ENCODE measurements at regions of chr17 and their contacts with region 1.

Region 1: DNA sequence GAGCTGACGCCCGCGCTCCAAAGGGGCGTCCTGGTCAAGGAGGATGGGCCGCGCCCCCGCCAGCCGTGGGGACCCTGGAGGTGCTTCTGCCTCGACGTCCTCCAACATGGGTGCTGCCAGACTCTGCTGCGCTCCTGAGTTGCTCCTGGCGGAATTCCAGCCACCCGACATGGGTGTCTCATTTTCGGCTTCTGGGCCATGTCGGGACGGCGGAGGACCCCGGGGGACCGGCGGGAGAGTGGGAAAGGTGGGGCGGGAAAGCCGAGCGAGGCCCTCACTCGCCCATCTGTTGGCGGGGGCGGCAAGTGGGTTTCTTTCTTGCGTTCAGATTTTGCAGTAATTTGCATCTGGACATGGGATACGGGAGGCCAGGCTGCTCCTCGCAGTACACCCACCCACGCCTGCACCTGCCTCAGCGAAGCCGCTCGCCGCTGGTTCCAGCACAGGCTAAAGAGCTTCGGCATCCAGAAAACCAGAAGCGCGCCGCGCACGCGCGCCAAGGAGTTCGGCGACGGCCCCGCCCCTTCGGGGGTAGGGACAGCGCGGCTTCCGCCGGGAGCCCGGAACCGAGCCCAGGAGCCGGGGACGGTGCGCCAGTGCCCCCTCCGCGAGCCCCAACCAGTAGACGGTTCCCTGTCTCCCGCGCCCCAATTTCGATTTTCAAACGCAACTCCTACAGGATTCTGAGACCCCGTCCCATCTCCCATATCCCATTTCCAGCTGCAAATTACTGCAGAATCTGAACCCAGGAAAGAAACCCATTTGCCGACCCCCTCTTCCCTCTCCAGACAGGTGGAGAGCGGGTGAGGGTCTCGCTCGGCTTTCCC is at the start of gene ARMC7:
- DNase-seq: peak; percentile 91
- ATAC-seq: peak; percentile 84
- H3K4me3 Mint-ChIP-seq: peak within 1 kb of the TSS; percentile 87
- H3K27ac Mint-ChIP-seq: peak within 1 kb of the TSS; percentile 90
- H3K4me1 Mint-ChIP-seq: peaks cover 32% of the 10 kb centered on the region
- H3K27me3 Mint-ChIP-seq: no peaks in the 10 kb centered on the region
- CTCF ChIP-seq: no peak
- total RNA-seq, gene ARMC7: 5.4 TPM

Region 2: GRCh38 chr17:74852237-74853047 is 257.2 kb before region 1 on chr17:
- CTCF ChIA-PET with region 1: no interaction called
- POLR2A ChIA-PET with region 1: no interaction called
- intact Hi-C with region 1: no loop called
- DNase-seq: peak; percentile 53
- ATAC-seq: peak; percentile 84
- H3K4me3 Mint-ChIP-seq: peak overlapping the region; percentile 57
- H3K27ac Mint-ChIP-seq: no peak overlapping the region
- H3K4me1 Mint-ChIP-seq: peaks cover 2% of the 10 kb centered on the region
- H3K27me3 Mint-ChIP-seq: peaks cover 49% of the 10 kb centered on the region
- CTCF ChIP-seq: no peak

Region 3: GRCh38 chr17:74950207-74950606 is 159.4 kb before region 1 on chr17:
- CTCF ChIA-PET with region 1: no interaction called
- POLR2A ChIA-PET with region 1: no interaction called
- intact Hi-C with region 1: no loop called
- DNase-seq: no peak
- ATAC-seq: no peak
- H3K4me3 Mint-ChIP-seq: no peak overlapping the region
- H3K27ac Mint-ChIP-seq: no peak overlapping the region
- H3K4me1 Mint-ChIP-seq: no peaks in the 10 kb centered on the region
- H3K27me3 Mint-ChIP-seq: no peaks in the 10 kb centered on the region
- CTCF ChIP-seq: no peak

Region 4: DNA sequence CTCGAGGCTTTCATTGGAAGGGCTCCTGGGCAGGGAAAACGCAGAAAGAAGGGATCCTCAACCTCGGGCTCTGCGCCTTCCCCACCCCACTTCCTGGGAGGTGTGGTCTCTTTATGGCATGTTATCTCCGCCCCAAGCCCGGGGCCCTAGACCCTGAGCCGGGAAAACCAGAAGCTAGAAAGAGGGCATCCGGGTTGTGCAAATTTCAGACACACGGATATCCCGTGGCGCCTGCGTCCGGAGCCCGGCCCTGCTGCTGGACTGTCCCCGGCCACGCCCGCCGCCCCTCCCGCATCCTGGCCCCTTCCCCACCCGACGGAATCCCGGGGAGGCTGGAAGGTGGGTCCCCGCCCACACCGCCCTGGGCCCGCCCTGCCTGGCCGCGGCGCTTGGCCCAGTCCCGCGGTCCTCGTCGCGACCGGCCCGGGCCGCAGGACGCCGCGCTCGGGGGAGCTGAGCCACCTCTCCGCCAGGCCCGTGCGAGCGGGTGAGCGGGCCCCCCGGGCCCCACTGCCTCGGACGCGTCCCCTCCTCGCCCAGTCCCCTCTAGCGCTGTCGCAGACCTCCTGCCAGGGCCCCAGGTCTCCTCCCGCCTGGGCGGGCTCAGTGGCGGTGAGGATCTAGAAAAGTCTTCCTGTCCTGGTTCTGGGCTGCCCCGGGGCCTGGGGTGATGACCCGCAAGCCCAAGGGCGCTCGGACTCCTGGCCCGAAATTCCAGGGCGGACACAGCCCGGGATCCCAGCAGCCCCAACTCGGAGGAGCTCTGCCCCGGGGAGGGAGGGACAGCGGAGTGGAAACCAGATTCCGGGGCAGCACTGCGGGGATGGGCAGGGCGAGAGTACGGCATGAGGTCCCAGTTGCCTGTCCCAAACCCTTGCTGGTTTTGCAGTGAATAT is 21.8 kb before region 1 on chr17 and contains the start of gene SLC16A5:
- CTCF ChIA-PET with region 1: interaction called, 15 read pairs
- POLR2A ChIA-PET with region 1: interaction called, 8 read pairs
- intact Hi-C with region 1: no loop called
- DNase-seq: peak; percentile 48
- ATAC-seq: peak; percentile 50
- H3K4me3 Mint-ChIP-seq: peak within 1 kb of the TSS; percentile 66
- H3K27ac Mint-ChIP-seq: peak within 1 kb of the TSS; percentile 42
- H3K4me1 Mint-ChIP-seq: peaks cover 24% of the 10 kb centered on the region
- H3K27me3 Mint-ChIP-seq: no peaks in the 10 kb centered on the region
- CTCF ChIP-seq: no peak
- total RNA-seq, gene SLC16A5: 2.0 to 2.8 TPM

Region 5: GRCh38 chr17:75131280-75132017 is 21.8 kb after region 1 on chr17 and contains the start of gene NT5C:
- CTCF ChIA-PET with region 1: interaction called, 147 read pairs
- POLR2A ChIA-PET with region 1: interaction called, 40 read pairs
- intact Hi-C with region 1: no loop called
- DNase-seq: peak; percentile 86
- ATAC-seq: peak; percentile 83
- H3K4me3 Mint-ChIP-seq: peak within 1 kb of the TSS; percentile 86
- H3K27ac Mint-ChIP-seq: peak within 1 kb of the TSS; percentile 93
- H3K4me1 Mint-ChIP-seq: peaks cover 12% of the 10 kb centered on the region
- H3K27me3 Mint-ChIP-seq: no peaks in the 10 kb centered on the region
- CTCF ChIP-seq: peak; percentile 51
- total RNA-seq, gene NT5C: 66.1 to 68.1 TPM

Region 6: DNA sequence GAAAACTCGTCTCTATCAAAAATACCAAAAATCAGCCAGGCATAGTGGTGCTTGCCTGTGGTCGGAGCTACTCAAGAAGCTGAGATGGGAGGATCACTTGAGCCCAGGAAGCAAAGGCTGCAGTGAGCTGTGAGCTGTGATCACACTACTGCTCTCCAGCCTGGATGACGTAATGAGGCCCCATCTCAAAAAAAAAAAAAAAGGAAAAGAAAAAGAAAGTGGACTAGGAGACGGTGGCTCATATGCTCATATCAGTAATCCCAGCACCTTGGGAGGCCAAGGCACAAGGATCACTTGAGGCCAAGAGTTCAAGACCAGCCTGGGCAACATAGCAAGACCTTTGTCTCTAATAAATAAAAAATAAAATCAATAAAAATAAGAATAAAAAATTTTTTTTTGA is 82.0 kb after region 1 on chr17:
- CTCF ChIA-PET with region 1: interaction called, 33 read pairs
- POLR2A ChIA-PET with region 1: interaction called, 7 read pairs
- intact Hi-C with region 1: no loop called
- DNase-seq: no peak
- ATAC-seq: no peak
- H3K4me3 Mint-ChIP-seq: no peak overlapping the region
- H3K27ac Mint-ChIP-seq: no peak overlapping the region
- H3K4me1 Mint-ChIP-seq: peaks cover 8% of the 10 kb centered on the region
- H3K27me3 Mint-ChIP-seq: no peaks in the 10 kb centered on the region
- CTCF ChIP-seq: no peak

Region 7: DNA sequence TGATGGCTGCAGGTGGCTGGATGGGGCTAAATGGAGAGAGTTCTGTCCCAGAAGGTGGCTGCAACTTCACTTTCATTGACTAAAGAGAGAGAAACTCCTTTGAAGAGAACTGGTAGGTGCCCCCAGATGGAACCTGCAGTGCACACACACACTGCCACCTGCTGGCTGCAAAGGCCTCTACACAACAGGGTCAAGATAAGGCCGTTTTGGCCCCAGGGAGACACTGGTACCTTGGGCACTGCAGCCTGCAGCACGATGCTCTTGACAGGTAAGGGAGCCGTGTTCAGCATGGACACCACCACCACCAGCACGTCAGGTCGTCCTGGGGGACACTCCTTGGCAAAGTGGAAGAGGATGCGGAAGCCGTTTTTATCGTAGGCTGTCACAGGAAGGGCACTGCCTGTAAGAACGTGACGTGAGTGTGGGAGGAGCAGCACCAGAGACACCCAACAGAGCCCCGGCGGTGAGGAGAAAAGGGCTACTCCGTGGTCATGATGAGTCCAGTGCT is 129.1 kb after region 1 on chr17:
- CTCF ChIA-PET with region 1: interaction called, 25 read pairs
- POLR2A ChIA-PET with region 1: interaction called, 4 read pairs
- intact Hi-C with region 1: no loop called
- DNase-seq: peak; percentile 73
- ATAC-seq: peak; percentile 66
- H3K4me3 Mint-ChIP-seq: no peak overlapping the region
- H3K27ac Mint-ChIP-seq: peak overlapping the region; percentile 76
- H3K4me1 Mint-ChIP-seq: peaks cover 36% of the 10 kb centered on the region
- H3K27me3 Mint-ChIP-seq: no peaks in the 10 kb centered on the region
- CTCF ChIP-seq: peak; percentile 73

Region 8: GRCh38 chr17:75412455-75413317 is 303.1 kb after region 1 on chr17:
- CTCF ChIA-PET with region 1: interaction called, 11 read pairs
- POLR2A ChIA-PET with region 1: no interaction called
- intact Hi-C with region 1: no loop called
- DNase-seq: peak; percentile 88
- ATAC-seq: peak; percentile 92
- H3K4me3 Mint-ChIP-seq: peak overlapping the region; percentile 33
- H3K27ac Mint-ChIP-seq: peak overlapping the region; percentile 23
- H3K4me1 Mint-ChIP-seq: peaks cover 14% of the 10 kb centered on the region
- H3K27me3 Mint-ChIP-seq: no peaks in the 10 kb centered on the region
- CTCF ChIP-seq: peak; percentile 81

Measured in activated CD8-positive, alpha-beta T cell treated with anti-CD3 and anti-CD28 coated beads for 36 hours (primary cell).